Caco-2 (cell line): ENCODE measurements at regions of chr11 and their contacts with region 1.

Region 1: GRCh38 chr11:72112321-72113219 is at the start of gene ANAPC15:
- DNase-seq: peak; percentile 99 to 100
- H3K4me3 ChIP-seq: peak within 1 kb of the TSS; percentile 52
- H3K4me3 Mint-ChIP-seq: peak within 1 kb of the TSS; percentile 94
- H3K27ac Mint-ChIP-seq: peak within 1 kb of the TSS; percentile 100
- H3K4me1 ChIP-seq: peaks cover 9% of the 10 kb centered on the region
- H3K4me1 Mint-ChIP-seq: no peaks in the 10 kb centered on the region
- H3K27me3 ChIP-seq: no peaks in the 10 kb centered on the region
- H3K27me3 Mint-ChIP-seq: no peaks in the 10 kb centered on the region
- CTCF ChIP-seq: no peak
- total RNA-seq, gene ANAPC15: 98.6 and 105 TPM in 2 replicates

Region 2: GRCh38 chr11:72174299-72175070 is 61.9 kb after region 1 on chr11:
- CTCF ChIA-PET with region 1: no interaction called
- POLR2A ChIA-PET with region 1: interaction called, 3 read pairs
- intact Hi-C with region 1: loop called (anchors 1 kb)
- DNase-seq: peak; percentile 51 to 84
- H3K4me3 ChIP-seq: no peak overlapping the region
- H3K4me3 Mint-ChIP-seq: peak overlapping the region; percentile 44
- H3K27ac Mint-ChIP-seq: peak overlapping the region; percentile 91
- H3K4me1 ChIP-seq: peaks cover 54% of the 10 kb centered on the region
- H3K4me1 Mint-ChIP-seq: peaks cover 31% of the 10 kb centered on the region
- H3K27me3 ChIP-seq: no peaks in the 10 kb centered on the region
- H3K27me3 Mint-ChIP-seq: no peaks in the 10 kb centered on the region
- CTCF ChIP-seq: no peak

Region 3: DNA sequence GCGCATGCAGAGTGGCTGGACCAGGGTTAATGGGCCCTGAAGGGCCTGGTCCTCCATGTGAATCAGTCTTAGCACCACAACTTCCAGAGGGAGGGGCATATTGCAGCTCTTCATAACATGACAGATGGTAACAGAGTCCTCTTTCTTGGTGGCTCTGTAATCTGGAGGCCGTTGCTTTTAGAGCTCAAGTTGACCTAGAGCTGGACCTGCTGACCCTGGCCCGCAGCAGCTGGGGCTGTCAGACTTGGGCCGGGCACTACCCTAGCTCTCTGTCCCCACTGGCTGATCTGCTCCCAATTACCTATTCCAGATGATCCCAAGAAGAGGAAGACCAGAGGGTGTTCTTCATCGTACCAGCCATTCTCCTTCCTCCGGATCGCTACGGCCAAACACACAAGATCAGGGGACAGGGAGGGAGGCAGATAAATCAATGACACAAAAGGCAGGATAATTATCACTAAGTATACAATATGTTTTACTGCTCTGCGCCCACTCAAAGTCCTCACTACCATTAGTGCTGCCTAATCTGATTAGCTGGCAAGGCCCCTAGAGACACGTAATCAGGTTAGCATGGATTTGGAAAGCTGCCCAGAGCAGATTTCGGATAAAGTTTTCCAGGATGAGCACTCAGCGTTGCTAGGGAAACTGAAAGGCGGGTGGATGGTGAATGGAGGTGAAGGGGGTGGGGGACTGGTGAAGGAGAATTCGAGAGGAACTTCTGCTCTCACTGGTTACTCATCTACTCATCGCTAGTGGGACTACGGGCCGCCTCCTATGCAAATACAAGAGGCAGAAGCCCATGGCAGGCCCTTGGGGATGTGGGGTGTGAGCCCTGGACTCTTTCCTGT is 195.9 kb after region 1 on chr11:
- CTCF ChIA-PET with region 1: no interaction called
- POLR2A ChIA-PET with region 1: no interaction called
- intact Hi-C with region 1: no loop called
- DNase-seq: no peak
- H3K4me3 ChIP-seq: no peak overlapping the region
- H3K4me3 Mint-ChIP-seq: no peak overlapping the region
- H3K27ac Mint-ChIP-seq: no peak overlapping the region
- H3K4me1 ChIP-seq: no peaks in the 10 kb centered on the region
- H3K4me1 Mint-ChIP-seq: no peaks in the 10 kb centered on the region
- H3K27me3 ChIP-seq: no peaks in the 10 kb centered on the region
- H3K27me3 Mint-ChIP-seq: no peaks in the 10 kb centered on the region
- CTCF ChIP-seq: no peak